Calu3 (cell line): ENCODE measurements at regions of chr17 and their contacts with region 1.

Region 1: GRCh38 chr17:35969558-35970380 is 11.5 kb downstream of the CCL16 start:
- DNase-seq: peak; percentile 77
- H3K4me3 Mint-ChIP-seq: no peak overlapping the region
- H3K27ac Mint-ChIP-seq: no peak overlapping the region
- H3K4me1 Mint-ChIP-seq: peaks cover 11% of the 10 kb centered on the region
- H3K27me3 Mint-ChIP-seq: peaks cover 27% of the 10 kb centered on the region
- CTCF ChIP-seq: peak; percentile 75

Region 2: DNA sequence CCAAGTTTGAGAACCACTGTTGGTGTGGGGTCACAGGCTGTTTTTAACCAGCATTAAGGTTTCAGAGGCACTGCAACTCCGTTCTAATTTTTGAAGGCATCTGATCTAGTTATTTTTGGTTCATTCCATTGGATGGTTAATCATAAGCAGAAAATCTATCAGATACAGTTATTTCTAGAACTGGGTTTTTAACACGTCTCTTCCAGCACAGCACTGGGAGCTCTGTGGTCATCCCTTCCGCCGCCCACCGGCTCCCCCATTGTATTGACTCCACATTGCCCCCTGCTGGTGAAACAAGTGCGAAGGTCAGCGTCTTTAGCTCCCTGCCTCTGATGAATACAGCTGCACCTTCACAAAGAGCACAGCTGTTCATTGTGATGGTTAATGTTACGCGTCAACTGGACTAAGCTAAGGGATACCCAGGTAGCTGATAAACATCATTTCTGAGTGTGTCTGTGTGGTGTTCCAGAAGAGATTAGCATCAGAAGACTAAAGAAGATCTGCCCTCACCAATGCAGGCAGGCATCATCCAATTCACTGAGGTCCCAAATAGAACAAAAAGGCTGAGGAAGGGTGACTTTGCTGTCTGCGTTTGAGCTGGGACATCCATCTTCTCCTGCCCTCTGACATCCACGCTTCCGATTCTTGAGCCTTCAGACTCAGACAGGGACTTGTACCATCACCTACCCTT is 102.8 kb after region 1 on chr17:
- CTCF ChIA-PET with region 1: interaction called, 39 read pairs
- intact Hi-C with region 1: loop called (anchors 2 kb)
- DNase-seq: peak; percentile 76
- H3K4me3 Mint-ChIP-seq: no peak overlapping the region
- H3K27ac Mint-ChIP-seq: no peak overlapping the region
- H3K4me1 Mint-ChIP-seq: no peaks in the 10 kb centered on the region
- H3K27me3 Mint-ChIP-seq: peaks cover 64% of the 10 kb centered on the region
- CTCF ChIP-seq: peak; percentile 77

Region 3: DNA sequence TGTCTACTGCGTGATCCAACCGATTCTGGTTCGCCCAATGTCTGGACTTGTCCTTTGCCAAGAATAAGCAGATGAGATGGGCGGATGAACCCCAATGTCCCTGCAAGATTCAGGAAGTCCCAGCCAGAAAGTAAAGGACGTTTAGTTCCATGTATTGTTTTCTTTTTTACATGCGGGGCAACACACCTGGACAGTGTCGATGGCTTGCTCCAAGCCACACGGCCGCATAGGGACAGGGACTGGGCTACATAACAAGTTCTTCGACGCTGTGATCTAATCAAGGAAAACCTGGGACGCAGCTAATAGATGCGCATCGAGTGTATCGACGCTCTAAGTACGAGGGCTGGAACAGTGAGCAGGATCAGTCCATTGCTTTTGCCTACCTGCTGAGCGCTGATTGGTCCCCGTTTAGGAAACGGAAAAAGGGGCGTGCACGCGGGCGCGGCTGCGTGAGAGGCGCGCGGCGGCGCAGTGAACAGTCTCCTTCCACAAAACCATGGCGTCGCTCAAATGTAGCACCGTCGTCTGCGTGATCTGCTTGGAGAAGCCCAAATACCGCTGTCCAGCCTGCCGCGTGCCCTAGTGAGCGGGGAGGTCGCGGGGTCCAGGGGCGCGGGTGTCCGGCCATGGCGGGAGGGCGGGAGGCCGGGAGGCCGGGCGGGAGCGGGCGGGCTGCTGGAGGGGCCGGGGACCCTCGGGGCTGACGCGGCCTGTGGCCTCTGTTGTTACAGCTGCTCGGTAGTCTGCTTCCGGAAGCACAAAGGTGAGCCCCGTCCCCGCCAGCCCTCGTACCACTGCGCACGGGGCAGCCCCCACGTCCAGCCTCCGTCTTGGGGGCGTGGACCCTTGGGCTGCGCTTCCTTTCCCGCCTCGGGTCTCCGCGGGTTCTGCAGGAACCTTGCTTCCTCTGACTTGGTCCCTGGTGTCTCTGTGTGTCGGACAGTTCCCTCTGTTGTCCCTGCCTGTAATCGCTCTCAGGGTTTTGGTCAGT is 516.7 kb after region 1 on chr17 and contains the start of gene ZNHIT3:
- CTCF ChIA-PET with region 1: interaction called, 8 read pairs
- intact Hi-C with region 1: loop called (anchors 2 kb)
- DNase-seq: peak; percentile 86
- H3K4me3 Mint-ChIP-seq: peak within 1 kb of the TSS; percentile 91
- H3K27ac Mint-ChIP-seq: peak within 1 kb of the TSS; percentile 95
- H3K4me1 Mint-ChIP-seq: peaks cover 9% of the 10 kb centered on the region
- H3K27me3 Mint-ChIP-seq: peaks cover 14% of the 10 kb centered on the region
- CTCF ChIP-seq: no peak
- total RNA-seq, gene ZNHIT3: 32.6 and 33.6 TPM in 2 replicates